T-cell (primary cell): ENCODE measurements at regions of chr20 and their contacts with region 1.

Region 1: DNA sequence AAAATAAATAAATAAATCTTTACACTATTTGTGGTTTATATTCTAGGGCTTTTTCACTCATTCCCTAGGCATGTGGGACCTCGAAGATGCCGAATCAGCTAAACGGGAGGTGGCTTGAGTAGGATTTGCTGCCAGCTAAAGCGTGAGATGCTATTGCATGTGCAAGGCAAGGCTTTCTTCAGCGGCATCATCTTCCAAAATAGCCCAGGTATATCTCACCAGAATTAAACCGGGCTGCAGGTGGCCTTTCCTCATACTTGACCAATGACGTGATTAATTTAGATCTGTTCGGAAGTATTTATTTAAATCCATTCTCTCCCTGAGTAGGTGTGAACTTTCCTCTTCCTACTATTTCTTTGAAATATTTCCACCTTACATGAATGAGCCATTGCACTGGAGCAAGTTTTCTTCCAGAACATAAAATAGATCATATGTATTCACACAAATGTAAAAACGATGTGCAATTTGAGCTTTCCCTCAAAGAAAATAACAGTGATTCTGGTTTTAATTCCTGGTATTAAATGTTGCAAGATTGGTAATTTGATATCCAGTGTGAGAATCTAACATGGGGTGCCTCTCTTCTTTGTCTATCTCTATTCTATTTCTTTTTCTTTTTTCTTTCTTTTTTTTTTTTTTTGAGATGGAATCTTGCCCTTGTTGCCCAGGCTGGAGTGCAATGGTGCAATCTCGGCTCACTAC is 24.3 kb upstream of the ZNF217 start:
- DNase-seq: no peak
- ATAC-seq: no peak
- H3K4me3 ChIP-seq: no peak overlapping the region
- H3K4me3 Mint-ChIP-seq: no peak overlapping the region
- H3K27ac ChIP-seq: no peak overlapping the region
- H3K27ac Mint-ChIP-seq: no peak overlapping the region
- H3K4me1 ChIP-seq: peaks cover 21 to 28% of the 10 kb centered on the region in 2 experiments
- H3K4me1 Mint-ChIP-seq: peaks cover 27 to 31% (median 28%) of the 10 kb centered on the region in 3 donors
- H3K27me3 ChIP-seq: no peaks in the 10 kb centered on the region
- H3K27me3 Mint-ChIP-seq: no peaks in the 10 kb centered on the region

Region 2: DNA sequence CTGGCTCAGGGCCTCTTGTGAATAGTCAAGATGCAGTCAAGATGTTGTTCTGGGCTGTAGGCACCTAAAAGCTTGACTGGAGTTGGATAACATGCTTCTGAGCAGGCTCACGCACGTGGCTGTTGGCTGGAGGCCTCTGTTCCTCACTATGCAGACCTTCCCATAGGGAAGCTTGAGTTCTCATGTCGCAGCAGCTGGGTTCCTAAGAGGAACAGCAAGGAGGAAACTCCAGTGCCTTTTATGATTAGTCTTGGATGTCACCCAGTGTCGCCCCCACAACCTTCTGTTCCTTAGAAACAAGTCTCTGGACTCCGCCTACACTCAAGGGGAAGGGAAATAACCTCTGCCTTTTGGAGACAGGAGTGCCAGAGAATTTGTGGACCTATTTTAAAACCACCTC is 241.7 kb after region 1 on chr20:
- CTCF ChIA-PET with region 1: no interaction called
- POLR2A ChIA-PET with region 1: interaction called in 1 of 2 experiments, 12 read pairs
- DNase-seq: no peak
- ATAC-seq: no peak
- H3K4me3 ChIP-seq: no peak overlapping the region
- H3K4me3 Mint-ChIP-seq: no peak overlapping the region
- H3K27ac ChIP-seq: no peak overlapping the region
- H3K27ac Mint-ChIP-seq: no peak overlapping the region
- H3K4me1 ChIP-seq: peaks cover 8 to 23% of the 10 kb centered on the region in 2 experiments
- H3K4me1 Mint-ChIP-seq: peaks cover 34 to 41% (median 38%) of the 10 kb centered on the region in 3 donors
- H3K27me3 ChIP-seq: no peaks in the 10 kb centered on the region
- H3K27me3 Mint-ChIP-seq: no peaks in the 10 kb centered on the region